ENCODE measurements at regions of chr6 and their contacts with region 1.

Region 1: GRCh38 chr6:109073344-109074132 is 21.1 kb downstream of the SESN1 start:
- DNase-seq: peak in 7 of 9 donors; percentile 56 to 78 (median 72)
- ATAC-seq: peak; percentile 85
- H3K4me3 ChIP-seq: no peak overlapping the region
- H3K4me3 Mint-ChIP-seq: peak overlapping the region in 8 of 10 donors; percentile 1 to 64 (median 24)
- H3K27ac ChIP-seq: no peak overlapping the region
- H3K27ac Mint-ChIP-seq: peak overlapping the region in 4 of 9 donors; percentile 1 to 44 (median 4)
- H3K4me1 ChIP-seq: peaks cover 18 to 39% of the 10 kb centered on the region in 2 donors
- H3K4me1 Mint-ChIP-seq: peaks cover 15 to 37% (median 22%) of the 10 kb centered on the region in 7 donors
- H3K27me3 ChIP-seq: no peaks in the 10 kb centered on the region
- H3K27me3 Mint-ChIP-seq: peaks cover 0 to 12% (median 0%) of the 10 kb centered on the region in 5 donors

Region 2: DNA sequence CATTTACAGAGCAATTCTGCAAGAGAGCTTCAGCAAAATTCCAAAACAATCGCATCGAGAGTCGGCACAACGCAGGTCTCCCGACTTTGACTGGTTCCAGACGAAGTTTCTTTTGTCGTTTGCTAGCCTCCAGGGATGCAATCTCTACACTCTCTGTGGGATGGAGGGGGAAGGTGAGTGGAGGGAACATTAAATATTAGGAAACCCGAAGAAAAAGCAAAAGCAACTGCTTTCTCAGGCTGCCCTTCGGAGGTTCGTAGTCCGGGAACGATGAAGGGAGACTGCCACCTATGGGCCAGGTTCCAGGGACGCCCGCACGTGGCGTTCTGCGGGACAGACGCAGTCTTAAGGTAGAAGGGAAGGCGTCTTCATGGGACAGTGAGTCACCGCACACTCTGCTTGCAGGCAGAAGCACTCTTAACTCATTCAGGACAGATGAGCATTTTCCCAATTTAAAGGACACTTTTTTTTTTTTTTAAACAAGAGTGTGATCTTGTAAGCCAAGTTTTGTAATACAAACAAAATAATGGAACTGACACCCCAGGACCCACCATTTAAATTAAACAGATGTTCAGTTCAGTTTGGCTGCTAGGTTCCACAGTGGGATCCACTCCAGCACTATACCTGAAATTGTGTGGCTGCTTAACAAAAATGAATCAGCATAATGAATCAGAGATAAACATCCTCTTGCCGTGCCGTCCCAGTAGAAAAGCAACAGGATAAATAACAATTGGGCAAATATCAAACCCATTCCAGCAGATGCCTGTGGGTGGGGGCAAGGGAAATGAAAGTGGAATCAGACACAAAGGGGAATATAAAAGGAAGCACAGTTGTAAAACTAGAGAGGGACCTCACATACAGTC is 291.1 kb before region 1 on chr6:
- CTCF ChIA-PET with region 1: interaction called, 9 read pairs
- POLR2A ChIA-PET with region 1: no interaction called
- intact Hi-C with region 1: loop called (anchors 1 kb)
- DNase-seq: peak; percentile 56 to 76 (median 71)
- ATAC-seq: peak; percentile 98
- H3K4me3 ChIP-seq: peak overlapping the region; percentile 52
- H3K4me3 Mint-ChIP-seq: peak overlapping the region; percentile 46 to 93 (median 87)
- H3K27ac ChIP-seq: no peak overlapping the region
- H3K27ac Mint-ChIP-seq: peak overlapping the region in 3 of 9 donors; percentile 47 to 64 (median 51)
- H3K4me1 ChIP-seq: no peaks in the 10 kb centered on the region
- H3K4me1 Mint-ChIP-seq: peaks cover 0 to 17% (median 10%) of the 10 kb centered on the region in 7 donors
- H3K27me3 ChIP-seq: no peaks in the 10 kb centered on the region
- H3K27me3 Mint-ChIP-seq: peaks cover 0 to 73% (median 5%) of the 10 kb centered on the region in 5 donors

Region 3: DNA sequence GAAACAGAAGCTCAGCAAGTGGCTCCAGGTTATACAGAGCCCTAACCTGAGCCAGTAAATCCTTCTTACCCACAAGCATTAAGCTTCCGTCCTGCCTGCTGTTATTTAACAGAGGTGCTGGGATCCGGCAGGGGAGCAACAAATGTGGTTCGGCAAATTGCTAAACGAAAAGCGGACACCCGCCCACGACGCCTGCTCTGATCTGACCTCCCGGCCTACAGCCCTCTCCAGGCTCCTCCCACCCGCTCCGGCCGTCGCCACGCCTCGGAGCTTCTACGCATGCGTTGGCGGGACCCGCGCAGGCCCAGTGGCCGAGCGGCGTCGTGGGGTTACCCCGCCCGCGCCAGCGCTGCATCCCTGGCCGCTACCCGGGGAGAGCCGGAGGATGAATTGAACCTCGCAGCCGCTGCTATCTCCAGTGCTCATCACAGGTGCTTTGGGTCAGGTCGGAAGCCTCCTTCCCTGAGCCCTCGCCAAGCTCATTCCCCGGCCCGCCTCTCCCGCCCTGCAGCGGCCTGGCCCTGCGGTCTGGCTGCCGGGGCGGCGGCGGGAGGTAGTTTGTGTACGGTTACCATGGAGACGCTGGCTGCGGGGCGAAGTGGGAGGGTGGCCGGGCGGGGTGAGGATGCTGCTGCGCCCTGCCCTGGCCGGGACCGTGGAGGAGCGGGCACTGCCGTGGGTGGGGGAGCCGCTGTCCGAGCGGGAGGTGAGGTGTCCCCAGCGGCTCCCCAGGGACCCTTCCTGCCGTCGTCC is 225.2 kb before region 1 on chr6 and contains the start of gene ARMC2:
- CTCF ChIA-PET with region 1: interaction called, 6 read pairs
- POLR2A ChIA-PET with region 1: interaction called, 6 read pairs
- intact Hi-C with region 1: loop called in 1 of 2 experiments (anchors 1 kb)
- DNase-seq: peak; percentile 72 to 95 (median 79)
- ATAC-seq: peak; percentile 94
- H3K4me3 ChIP-seq: peak within 1 kb of the TSS; percentile 90
- H3K4me3 Mint-ChIP-seq: peak within 1 kb of the TSS; percentile 75 to 93 (median 88)
- H3K27ac ChIP-seq: peak within 1 kb of the TSS; percentile 69
- H3K27ac Mint-ChIP-seq: peak within 1 kb of the TSS; percentile 72 to 93 (median 85)
- H3K4me1 ChIP-seq: peaks cover 6 to 13% of the 10 kb centered on the region in 2 donors
- H3K4me1 Mint-ChIP-seq: peaks cover 11 to 39% (median 29%) of the 10 kb centered on the region in 7 donors
- H3K27me3 ChIP-seq: no peaks in the 10 kb centered on the region
- H3K27me3 Mint-ChIP-seq: peaks cover 0 to 36% (median 0%) of the 10 kb centered on the region in 5 donors
- total RNA-seq, gene ARMC2: 6.2 to 12.7 (median 7.9) TPM

Region 4: GRCh38 chr6:108944707-108945680 is 128.5 kb before region 1 on chr6:
- CTCF ChIA-PET with region 1: interaction called, 10 read pairs
- POLR2A ChIA-PET with region 1: interaction called, 4 read pairs
- intact Hi-C with region 1: loop called (anchors 1 to 5 kb)
- DNase-seq: no peak
- ATAC-seq: no peak
- H3K4me3 ChIP-seq: no peak overlapping the region
- H3K4me3 Mint-ChIP-seq: peak overlapping the region in 1 of 10 donors; percentile 17
- H3K27ac ChIP-seq: no peak overlapping the region
- H3K27ac Mint-ChIP-seq: peak overlapping the region in 6 of 9 donors; percentile 5 to 75 (median 66)
- H3K4me1 ChIP-seq: peaks cover 28 to 38% of the 10 kb centered on the region in 2 donors
- H3K4me1 Mint-ChIP-seq: peaks cover 22 to 82% (median 73%) of the 10 kb centered on the region in 7 donors
- H3K27me3 ChIP-seq: no peaks in the 10 kb centered on the region
- H3K27me3 Mint-ChIP-seq: peaks cover 0 to 5% (median 0%) of the 10 kb centered on the region in 5 donors

Measured in naive thymus-derived CD4-positive, alpha-beta T cell (primary cell).